Right lobe of liver (tissue), 6 donors: ENCODE measurements at regions of chr1 and their contacts with region 1.

Region 1: DNA sequence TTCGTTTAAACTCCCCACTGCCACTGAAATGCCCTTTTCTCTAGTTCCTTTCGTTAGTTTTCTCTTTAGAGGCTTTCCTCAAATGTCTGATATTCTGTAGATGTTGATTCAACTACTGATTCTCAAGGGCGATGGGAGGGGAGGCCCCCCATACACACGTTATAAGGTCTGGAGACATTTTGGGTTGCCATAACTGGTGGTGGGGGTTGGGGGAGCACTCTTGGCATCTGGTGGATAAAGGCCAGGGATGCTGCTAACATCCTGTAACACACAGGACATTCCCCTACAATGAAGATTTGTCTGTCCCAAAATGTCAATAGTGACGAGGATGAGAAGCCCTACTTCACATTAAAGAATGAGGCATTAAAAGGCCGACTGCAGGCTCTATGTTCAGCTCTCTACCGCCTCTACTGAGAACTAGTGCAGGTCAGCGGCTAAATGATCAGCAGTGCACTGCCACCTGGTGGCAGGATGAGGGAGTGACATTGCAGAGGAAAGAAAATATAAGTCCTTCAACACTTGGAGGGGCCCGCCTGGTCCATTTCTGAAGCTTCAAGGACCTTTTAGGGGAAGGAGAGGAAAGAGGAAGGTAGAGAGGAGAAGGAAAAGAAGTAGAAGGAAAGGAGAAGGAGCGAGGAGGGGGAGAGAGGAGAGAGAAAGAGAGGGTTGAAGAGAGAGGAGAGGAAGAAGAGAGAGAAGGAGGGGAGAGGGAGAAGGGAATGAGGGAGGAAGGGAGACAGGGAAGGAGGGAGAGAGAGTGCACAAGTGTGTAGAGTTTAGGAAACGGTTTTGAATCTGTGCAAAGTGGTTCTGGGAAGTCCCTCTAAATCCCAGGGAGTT is 29.4 kb downstream of the ALG14 start:
- DNase-seq: peak; percentile 67 to 81 (median 77)
- ATAC-seq: peak; percentile 94 to 97 (median 96)
- H3K4me3 ChIP-seq: no peak overlapping the region
- H3K27ac ChIP-seq: no peak overlapping the region
- H3K4me1 ChIP-seq: peaks cover 0 to 5% (median 0%) of the 10 kb centered on the region in 4 donors
- H3K27me3 ChIP-seq: no peaks in the 10 kb centered on the region
- CTCF ChIP-seq: peak; percentile 95 to 99 (median 98)
- POLR2A ChIP-seq: no peak

Region 2: DNA sequence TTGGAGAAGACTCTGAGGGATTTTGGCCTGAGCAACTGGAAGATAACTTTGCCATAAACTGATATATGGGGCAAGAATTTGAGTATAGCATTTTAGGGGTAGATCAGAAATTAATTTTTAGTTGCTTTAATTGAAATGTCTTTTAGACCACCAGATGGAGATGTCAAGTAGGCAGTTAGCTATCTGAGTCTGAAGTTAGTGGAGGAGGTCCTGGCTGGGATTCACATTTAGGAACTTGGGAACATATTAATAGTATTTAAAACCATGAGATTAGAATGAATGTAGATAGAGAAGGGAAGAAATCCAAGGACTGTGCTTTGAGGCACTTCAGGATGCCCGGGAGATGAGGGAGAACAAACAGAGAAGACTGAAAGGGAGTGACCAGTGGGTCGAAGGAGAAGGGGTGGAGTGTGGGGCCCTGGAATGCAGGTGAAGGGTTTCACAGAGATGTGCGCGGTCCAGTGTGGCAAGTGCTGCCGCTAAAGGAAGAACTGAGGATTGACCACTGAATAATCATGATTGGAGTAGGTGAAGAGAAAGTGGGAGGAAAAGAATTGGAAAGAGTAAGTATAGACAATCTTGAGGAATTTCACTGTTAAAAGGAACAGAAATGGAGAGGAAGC is 190.5 kb before region 1 on chr1:
- intact Hi-C with region 1: loop called in 1 of 2 experiments (anchors 2 kb)
- DNase-seq: no peak
- ATAC-seq: no peak
- H3K4me3 ChIP-seq: no peak overlapping the region
- H3K27ac ChIP-seq: no peak overlapping the region
- H3K4me1 ChIP-seq: no peaks in the 10 kb centered on the region
- H3K27me3 ChIP-seq: no peaks in the 10 kb centered on the region
- CTCF ChIP-seq: no peak
- POLR2A ChIP-seq: no peak

Region 3: GRCh38 chr1:95067062-95067461 is 23.7 kb after region 1 on chr1:
- intact Hi-C with region 1: no loop called
- DNase-seq: peak in 1 of 3 donors; percentile 58
- ATAC-seq: peak; percentile 53 to 79 (median 69)
- H3K4me3 ChIP-seq: no peak overlapping the region
- H3K27ac ChIP-seq: peak overlapping the region in 2 of 3 donors; percentile 79 to 96
- H3K4me1 ChIP-seq: peaks cover 0 to 36% (median 17%) of the 10 kb centered on the region in 4 donors
- H3K27me3 ChIP-seq: no peaks in the 10 kb centered on the region
- CTCF ChIP-seq: no peak
- POLR2A ChIP-seq: no peak